ENCODE measurements at regions of chr15 and their contacts with region 1.

Region 1: DNA sequence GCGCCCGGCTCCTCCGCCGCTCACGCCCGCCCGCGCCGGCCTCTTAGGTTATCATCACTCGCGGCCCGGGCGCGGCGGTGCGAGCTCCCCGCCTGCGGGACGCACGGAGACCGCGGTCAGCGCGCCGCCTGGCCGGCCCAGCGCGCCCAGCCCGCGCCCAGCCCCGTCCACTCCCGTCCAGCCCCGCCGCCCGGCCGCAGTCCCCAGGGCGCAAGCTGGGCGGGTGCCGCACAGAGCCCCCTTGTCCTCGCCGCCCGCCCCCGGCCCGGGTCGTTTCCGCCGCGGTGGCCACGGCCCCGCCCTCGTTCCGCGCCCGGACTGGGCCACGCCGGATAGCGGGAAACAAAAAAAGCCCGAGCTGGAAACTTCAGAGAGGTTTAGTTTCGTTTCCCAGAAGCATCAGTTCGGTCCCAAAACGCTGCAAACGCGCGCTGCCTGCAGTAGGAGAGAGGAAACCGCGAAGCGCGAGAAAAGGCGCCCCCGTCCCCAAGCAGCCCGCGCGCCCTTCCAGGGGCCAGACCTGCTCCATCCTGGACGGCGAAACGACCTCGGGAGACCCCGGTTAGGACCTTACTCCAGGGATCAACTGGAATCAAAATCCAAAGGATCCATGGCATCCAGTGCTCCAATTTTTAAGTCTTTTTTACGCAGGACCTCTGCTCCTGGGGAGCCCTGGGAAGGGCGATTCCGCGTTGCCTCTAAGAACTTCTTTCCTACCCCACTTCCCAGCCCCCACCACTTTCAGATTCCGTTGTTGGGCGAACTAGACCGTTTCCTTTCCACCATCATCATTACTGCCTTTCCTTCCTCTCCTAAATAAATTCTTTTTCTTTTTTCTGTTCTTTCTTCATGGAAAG is at the start of gene ATP10A:
- DNase-seq: peak; percentile 93
- H3K4me3 Mint-ChIP-seq: peak within 1 kb of the TSS; percentile 97
- H3K27ac Mint-ChIP-seq: peak within 1 kb of the TSS; percentile 89
- H3K4me1 Mint-ChIP-seq: peaks cover 39% of the 10 kb centered on the region
- H3K27me3 Mint-ChIP-seq: peaks cover 5% of the 10 kb centered on the region
- total RNA-seq, gene ATP10A: 42.7 and 48.0 TPM in 2 replicates

Region 2: GRCh38 chr15:25812073-25812472 is 51.3 kb before region 1 on chr15:
- intact Hi-C with region 1: loop called (anchors 2 kb)
- DNase-seq: no peak
- H3K4me3 Mint-ChIP-seq: peak overlapping the region; percentile 78
- H3K27ac Mint-ChIP-seq: peak overlapping the region; percentile 85
- H3K4me1 Mint-ChIP-seq: peaks cover 59% of the 10 kb centered on the region
- H3K27me3 Mint-ChIP-seq: no peaks in the 10 kb centered on the region

Region 3: GRCh38 chr15:25825207-25825606 is 38.1 kb before region 1 on chr15:
- intact Hi-C with region 1: no loop called
- DNase-seq: no peak
- H3K4me3 Mint-ChIP-seq: no peak overlapping the region
- H3K27ac Mint-ChIP-seq: no peak overlapping the region
- H3K4me1 Mint-ChIP-seq: peaks cover 35% of the 10 kb centered on the region
- H3K27me3 Mint-ChIP-seq: no peaks in the 10 kb centered on the region

Region 4: DNA sequence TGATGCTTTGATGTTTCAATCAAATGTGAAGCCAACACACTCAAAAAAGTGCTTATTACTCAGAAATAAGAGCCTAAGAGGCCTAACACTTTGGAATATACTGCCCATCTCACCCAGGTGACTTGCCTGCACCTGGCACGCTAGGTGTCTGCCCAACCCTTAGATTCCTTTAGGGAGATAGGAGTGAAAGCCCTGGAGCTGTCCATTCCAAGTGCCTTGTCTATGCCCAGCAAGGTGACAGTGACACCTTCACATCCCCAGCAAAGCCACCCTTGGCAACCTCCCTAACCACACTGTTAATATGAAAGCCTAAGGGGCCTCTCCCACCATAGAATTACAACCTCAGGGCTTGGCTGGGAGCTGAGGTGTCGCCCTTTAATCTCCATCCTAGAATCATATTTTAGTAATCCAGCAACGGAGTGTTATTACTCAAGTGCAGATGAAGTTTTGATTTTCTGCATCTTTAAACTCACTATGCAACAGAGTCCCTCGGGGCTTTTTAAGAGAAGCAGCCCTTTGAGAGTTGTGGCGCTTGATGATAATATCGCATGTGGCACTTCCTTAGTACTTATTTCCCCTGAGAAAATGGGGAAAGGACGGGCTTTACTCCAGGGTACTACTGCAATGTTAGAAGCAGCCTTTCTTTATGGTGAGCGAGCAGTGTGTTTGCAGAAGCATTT is 25.0 kb before region 1 on chr15:
- intact Hi-C with region 1: loop called (anchors 2 kb)
- DNase-seq: no peak
- H3K4me3 Mint-ChIP-seq: no peak overlapping the region
- H3K27ac Mint-ChIP-seq: peak overlapping the region; percentile 1
- H3K4me1 Mint-ChIP-seq: peaks cover 45% of the 10 kb centered on the region
- H3K27me3 Mint-ChIP-seq: no peaks in the 10 kb centered on the region